Psoas muscle (tissue), 8 donors: ENCODE measurements at regions of chr1 and their contacts with region 1.

Region 1: DNA sequence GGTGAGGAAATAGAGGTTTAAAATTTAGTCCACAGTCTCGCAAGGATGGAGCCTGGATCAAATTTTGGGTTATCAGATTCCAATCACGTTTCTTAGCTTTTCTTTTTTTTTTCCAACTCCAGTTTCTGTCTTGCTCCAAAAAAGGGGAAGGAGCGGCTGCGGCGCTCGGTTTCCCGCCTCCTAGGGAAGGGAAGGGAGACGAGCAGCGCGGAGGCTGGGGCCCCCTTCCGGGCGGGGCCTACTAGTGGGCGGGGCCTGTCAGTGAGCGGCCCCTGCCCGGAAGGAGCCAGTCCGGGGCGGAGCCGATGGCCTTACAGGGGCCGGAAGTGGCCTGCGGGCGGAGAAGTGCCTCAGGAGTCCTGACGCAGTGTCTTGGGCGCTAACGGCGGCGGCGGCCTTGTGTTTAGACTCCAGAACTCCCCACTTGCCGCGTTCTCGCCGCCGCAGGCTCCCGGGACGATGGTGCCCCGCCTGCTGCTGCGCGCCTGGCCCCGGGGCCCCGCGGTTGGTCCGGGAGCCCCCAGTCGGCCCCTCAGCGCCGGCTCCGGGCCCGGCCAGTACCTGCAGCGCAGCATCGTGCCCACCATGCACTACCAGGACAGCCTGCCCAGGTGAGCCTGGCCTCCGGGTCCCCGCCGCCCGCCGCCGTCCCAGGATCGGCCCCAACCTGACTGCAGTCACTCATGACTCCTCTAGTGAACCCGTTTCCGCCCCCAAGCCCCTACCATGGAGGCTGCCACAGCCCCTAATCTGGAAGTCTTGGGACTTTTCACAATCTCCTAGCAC is at the start of gene CPT2:
- DNase-seq: peak; percentile 96 to 97
- ATAC-seq: peak; percentile 98 to 99 (median 99)
- H3K4me3 ChIP-seq: peak within 1 kb of the TSS; percentile 93
- H3K27ac ChIP-seq: peak within 1 kb of the TSS; percentile 98
- H3K4me1 ChIP-seq: peaks cover 31% of the 10 kb centered on the region
- H3K27me3 ChIP-seq: no peaks in the 10 kb centered on the region
- CTCF ChIP-seq: no peak
- total RNA-seq, gene CPT2: 18.7 to 31.6 (median 22.2) TPM

Region 2: GRCh38 chr1:52825868-52826267 is 370.8 kb before region 1 on chr1:
- intact Hi-C with region 1: no loop called
- DNase-seq: no peak
- ATAC-seq: no peak
- H3K4me3 ChIP-seq: no peak overlapping the region
- H3K27ac ChIP-seq: no peak overlapping the region
- H3K4me1 ChIP-seq: no peaks in the 10 kb centered on the region
- H3K27me3 ChIP-seq: no peaks in the 10 kb centered on the region
- CTCF ChIP-seq: no peak

Region 3: GRCh38 chr1:53014791-53015507 is 181.7 kb before region 1 on chr1:
- intact Hi-C with region 1: loop called in 1 of 2 experiments (anchors 10 kb)
- DNase-seq: peak; percentile 63 to 65
- ATAC-seq: peak; percentile 61 to 99 (median 94)
- H3K4me3 ChIP-seq: peak overlapping the region; percentile 69
- H3K27ac ChIP-seq: peak overlapping the region; percentile 20
- H3K4me1 ChIP-seq: peaks cover 17% of the 10 kb centered on the region
- H3K27me3 ChIP-seq: no peaks in the 10 kb centered on the region
- CTCF ChIP-seq: no peak

Region 4: GRCh38 chr1:53238197-53239155 is 41.8 kb after region 1 on chr1 and contains the start of gene MAGOH:
- intact Hi-C with region 1: loop called in 1 of 2 experiments (anchors 5 kb)
- DNase-seq: peak; percentile 93 to 96
- ATAC-seq: peak; percentile 97 to 99 (median 98)
- H3K4me3 ChIP-seq: peak within 1 kb of the TSS; percentile 90
- H3K27ac ChIP-seq: peak within 1 kb of the TSS; percentile 83
- H3K4me1 ChIP-seq: peaks cover 23% of the 10 kb centered on the region
- H3K27me3 ChIP-seq: peaks cover 0 to 6% (median 0%) of the 10 kb centered on the region in 3 donors
- CTCF ChIP-seq: no peak
- total RNA-seq, gene MAGOH: 15.9 to 33.6 (median 26.4) TPM